GM12878 (cell line): ENCODE measurements at regions of chr13 and their contacts with region 1.

Region 1: DNA sequence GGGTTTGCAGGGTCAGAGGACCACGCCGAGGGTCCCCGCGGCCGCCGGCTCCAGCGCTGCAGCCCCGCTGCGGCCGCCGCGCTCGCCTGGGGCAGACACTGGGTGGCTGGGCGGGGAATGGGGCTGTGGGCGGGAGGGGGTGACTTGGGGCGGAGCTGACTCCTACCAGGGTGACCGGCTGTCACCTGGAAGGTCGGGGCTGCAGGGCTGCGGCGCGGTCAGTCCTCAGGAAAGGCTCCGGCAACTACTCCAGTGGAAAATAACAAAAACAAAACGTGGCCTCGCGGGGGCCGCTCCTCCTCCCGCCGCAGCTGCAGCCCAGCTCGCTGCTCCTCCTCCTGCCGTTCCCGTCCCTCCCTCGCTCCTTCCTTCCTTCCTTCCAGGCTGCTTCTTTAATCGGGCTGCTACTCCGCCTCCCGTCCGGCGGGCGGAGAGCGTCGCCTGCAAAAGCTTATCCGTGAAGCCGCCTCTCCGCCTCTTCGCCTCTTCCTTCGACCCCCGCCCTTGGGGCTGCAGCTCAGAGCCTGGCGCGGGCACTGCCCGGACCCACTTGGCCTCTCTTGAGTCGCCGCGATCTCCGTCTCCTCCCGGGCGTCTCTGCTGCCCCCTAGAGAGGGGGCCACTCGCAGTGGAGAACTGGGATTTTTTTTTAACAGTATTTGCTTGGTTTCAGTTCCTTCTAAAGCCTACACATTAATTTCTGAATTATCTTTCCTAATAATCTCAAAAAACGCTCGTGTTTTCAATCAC is at the start of gene TBC1D4:
- DNase-seq: peak; percentile 66
- ATAC-seq: peak; percentile 86
- H3K4me3 ChIP-seq: peak within 1 kb of the TSS; percentile 82
- H3K27ac ChIP-seq: peak within 1 kb of the TSS; percentile 55
- H3K4me1 ChIP-seq: peaks cover 8% of the 10 kb centered on the region
- H3K27me3 ChIP-seq: no peaks in the 10 kb centered on the region
- CTCF ChIP-seq: peak; percentile 81 to 88 (median 86)
- EP300 ChIP-seq: peak in 1 of 2 experiments; percentile 84; a peak in 2 of 4 replicates
- POLR2A ChIP-seq: peak; percentile 73
- RAD21 ChIP-seq: peak; percentile 82
- polyA plus RNA-seq, gene TBC1D4: 11.0 to 11.9 TPM

Region 2: GRCh38 chr13:75299913-75300862 is 182.1 kb before region 1 on chr13:
- CTCF ChIA-PET with region 1: no interaction called
- POLR2A ChIA-PET with region 1: no interaction called
- RAD21 ChIA-PET with region 1: interaction called, 4 read pairs
- SMC1A ChIA-PET with region 1: no interaction called
- in situ Hi-C with region 1: no loop called
- intact Hi-C with region 1: loop called (anchors 5 kb)
- DNase-seq: peak; percentile 67
- ATAC-seq: peak; percentile 80
- H3K4me3 ChIP-seq: no peak overlapping the region
- H3K27ac ChIP-seq: peak overlapping the region; percentile 78
- H3K4me1 ChIP-seq: peaks cover 12% of the 10 kb centered on the region
- H3K27me3 ChIP-seq: no peaks in the 10 kb centered on the region
- CTCF ChIP-seq: no peak
- EP300 ChIP-seq: peak; percentile 62 to 71; a peak in 3 of 4 replicates
- POLR2A ChIP-seq: no peak
- RAD21 ChIP-seq: no peak

Region 3: GRCh38 chr13:75357576-75358289 is 124.5 kb before region 1 on chr13:
- CTCF ChIA-PET with region 1: interaction called, 11 read pairs
- POLR2A ChIA-PET with region 1: no interaction called
- RAD21 ChIA-PET with region 1: interaction called, 6 read pairs
- SMC1A ChIA-PET with region 1: interaction called, 5 read pairs
- in situ Hi-C with region 1: no loop called
- intact Hi-C with region 1: no loop called
- DNase-seq: no peak
- ATAC-seq: peak; percentile 95
- H3K4me3 ChIP-seq: no peak overlapping the region
- H3K27ac ChIP-seq: no peak overlapping the region
- H3K4me1 ChIP-seq: no peaks in the 10 kb centered on the region
- H3K27me3 ChIP-seq: no peaks in the 10 kb centered on the region
- CTCF ChIP-seq: peak; percentile 64 to 83 (median 75)
- EP300 ChIP-seq: no peak
- POLR2A ChIP-seq: no peak
- RAD21 ChIP-seq: peak; percentile 66

Region 4: DNA sequence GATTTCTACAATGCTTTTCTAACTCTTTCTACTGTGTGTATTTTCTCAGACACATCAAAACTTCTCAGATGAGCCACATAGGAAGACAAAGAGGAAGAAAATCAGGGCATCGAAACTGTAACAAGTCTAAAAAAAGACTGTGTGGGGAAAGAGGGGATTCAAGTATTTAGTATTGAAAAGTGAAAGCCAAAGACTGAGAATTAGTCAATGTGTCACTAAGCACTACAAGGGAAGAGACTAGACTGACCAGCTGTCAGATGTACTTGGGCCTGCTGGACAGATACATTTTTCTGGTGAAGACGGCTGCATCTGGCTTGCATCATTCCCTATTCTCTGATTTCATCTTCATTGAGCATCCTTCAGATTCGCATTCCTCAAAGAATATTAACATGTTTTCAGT is 30.0 kb after region 1 on chr13:
- CTCF ChIA-PET with region 1: interaction called, 4 read pairs
- POLR2A ChIA-PET with region 1: no interaction called
- RAD21 ChIA-PET with region 1: interaction called, 7 read pairs
- SMC1A ChIA-PET with region 1: interaction called, 18 read pairs
- in situ Hi-C with region 1: no loop called
- intact Hi-C with region 1: no loop called
- DNase-seq: peak; percentile 80
- ATAC-seq: peak; percentile 93
- H3K4me3 ChIP-seq: no peak overlapping the region
- H3K27ac ChIP-seq: no peak overlapping the region
- H3K4me1 ChIP-seq: peaks cover 40% of the 10 kb centered on the region
- H3K27me3 ChIP-seq: no peaks in the 10 kb centered on the region
- CTCF ChIP-seq: no peak
- EP300 ChIP-seq: peak in 1 of 2 experiments; percentile 20; a peak in 1 of 4 replicates
- POLR2A ChIP-seq: no peak
- RAD21 ChIP-seq: no peak

Region 5: DNA sequence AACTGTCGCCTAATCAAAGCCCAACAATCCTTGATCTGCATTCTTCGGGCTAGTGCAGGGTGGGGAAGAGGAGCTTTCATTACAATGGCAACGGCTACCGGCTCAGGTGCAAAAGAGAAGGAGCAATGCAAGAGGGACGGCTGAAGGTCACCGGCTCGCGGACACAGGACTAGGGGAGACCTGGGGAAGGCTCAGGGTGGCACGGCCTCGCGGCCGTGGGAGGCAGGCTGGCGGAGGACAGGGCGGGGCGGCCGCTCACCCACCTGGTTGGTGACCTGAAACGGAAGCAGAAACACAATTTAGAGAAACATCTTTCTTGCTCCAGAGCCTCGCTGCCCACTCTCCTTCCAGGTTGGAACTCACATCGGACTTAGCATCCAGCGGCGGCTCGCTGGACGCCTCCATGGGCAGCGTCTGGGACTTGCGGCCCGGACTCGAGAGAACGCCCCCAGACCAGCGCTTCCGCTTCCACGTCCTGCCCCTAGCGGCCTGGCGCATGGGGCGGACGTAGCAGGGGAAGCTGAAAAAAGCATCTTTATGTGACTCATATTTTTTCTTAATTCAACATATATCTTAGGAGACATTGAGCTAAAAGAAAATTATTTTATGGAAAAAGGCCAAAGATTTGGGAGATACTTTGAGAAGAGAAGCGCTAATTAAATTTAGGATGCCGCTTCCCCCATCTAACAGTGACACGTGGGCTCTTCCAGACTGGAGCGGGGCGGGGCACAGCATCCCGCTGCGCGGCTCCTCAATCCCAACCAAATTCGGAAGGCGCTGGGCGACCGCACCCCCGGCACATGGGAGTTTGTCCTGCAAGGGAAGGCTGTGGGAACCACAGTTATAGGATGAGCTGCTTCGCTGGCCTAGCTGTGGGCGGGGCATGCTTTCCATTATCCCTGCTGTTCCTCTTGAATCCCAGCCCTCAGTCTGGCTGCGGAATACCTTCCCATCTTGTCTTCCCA is 55.4 kb after region 1 on chr13 and contains the start of gene COMMD6:
- CTCF ChIA-PET with region 1: interaction called, 5 read pairs
- POLR2A ChIA-PET with region 1: interaction called, 3 read pairs
- RAD21 ChIA-PET with region 1: interaction called, 5 read pairs
- SMC1A ChIA-PET with region 1: interaction called, 5 read pairs
- in situ Hi-C with region 1: no loop called
- intact Hi-C with region 1: loop called (anchors 2 kb)
- DNase-seq: peak; percentile 42
- ATAC-seq: peak; percentile 97
- H3K4me3 ChIP-seq: peak within 1 kb of the TSS; percentile 96
- H3K27ac ChIP-seq: peak within 1 kb of the TSS; percentile 28
- H3K4me1 ChIP-seq: peaks cover 5% of the 10 kb centered on the region; the same call in 1 of the 2 replicates
- H3K27me3 ChIP-seq: no peaks in the 10 kb centered on the region
- CTCF ChIP-seq: no peak
- EP300 ChIP-seq: no peak
- POLR2A ChIP-seq: peak; percentile 97
- RAD21 ChIP-seq: no peak
- polyA plus RNA-seq, gene COMMD6: 473 to 509 TPM

Region 6: DNA sequence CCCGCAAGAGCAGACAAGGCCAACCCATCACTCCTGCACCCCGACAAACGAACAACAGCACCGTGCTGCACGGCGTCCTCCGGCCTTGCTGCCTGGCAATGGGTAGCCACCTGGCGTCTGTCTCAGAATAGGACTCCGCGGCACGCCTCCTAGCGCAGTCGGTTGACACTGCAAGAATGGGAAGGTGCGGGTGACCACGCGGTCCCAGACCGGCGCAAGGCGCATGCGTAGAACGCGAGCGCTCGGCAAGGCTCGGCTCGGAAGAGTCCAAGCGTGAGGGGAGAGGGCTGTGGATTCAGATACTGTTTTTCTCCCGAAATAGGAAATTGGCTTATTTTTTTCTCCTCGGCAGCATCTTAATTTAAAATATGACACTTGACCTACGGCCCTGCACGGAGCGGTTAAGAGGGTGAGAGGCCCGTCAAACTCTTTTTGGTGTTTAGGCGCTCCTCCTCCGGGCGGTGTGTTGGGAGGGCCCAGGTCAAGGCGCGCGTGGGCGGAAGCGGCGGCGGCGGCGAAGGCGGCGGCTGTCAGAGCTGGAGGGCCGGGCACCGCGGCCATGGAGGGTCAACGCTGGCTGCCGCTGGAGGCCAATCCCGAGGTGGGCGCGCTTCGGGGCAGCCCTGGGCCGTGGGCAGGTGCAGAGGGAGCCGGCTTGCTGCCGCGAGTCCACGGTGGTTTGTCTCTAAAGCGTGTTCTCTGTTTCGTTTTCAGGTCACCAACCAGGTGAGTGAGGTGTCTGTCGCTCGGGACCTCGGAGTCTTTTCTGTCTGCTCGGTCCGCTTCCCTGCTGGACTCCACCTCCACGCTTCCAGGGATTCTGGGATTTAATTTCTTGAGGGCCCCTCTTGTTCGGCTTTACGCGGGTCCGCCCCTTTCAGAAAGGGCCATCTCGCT is 67.3 kb after region 1 on chr13 and contains the start of gene UCHL3:
- CTCF ChIA-PET with region 1: interaction called, 16 read pairs
- POLR2A ChIA-PET with region 1: no interaction called
- RAD21 ChIA-PET with region 1: interaction called, 17 read pairs
- SMC1A ChIA-PET with region 1: interaction called, 4 read pairs
- in situ Hi-C with region 1: no loop called
- intact Hi-C with region 1: loop called (anchors 1 kb)
- DNase-seq: peak; percentile 89
- ATAC-seq: peak; percentile 97
- H3K4me3 ChIP-seq: peak within 1 kb of the TSS; percentile 86
- H3K27ac ChIP-seq: peak within 1 kb of the TSS; percentile 82
- H3K4me1 ChIP-seq: peaks cover 9% of the 10 kb centered on the region
- H3K27me3 ChIP-seq: no peaks in the 10 kb centered on the region
- CTCF ChIP-seq: peak; percentile 95 to 99 (median 96); a peak in 5 of 6 replicates
- EP300 ChIP-seq: 0 out of 4 replicates have a peak, but pooled peaks of 1 of the 2 experiments have one; percentile 35
- POLR2A ChIP-seq: peak; percentile 97
- RAD21 ChIP-seq: peak; percentile 88
- polyA plus RNA-seq, gene UCHL3: 163 to 166 TPM

Region 7: GRCh38 chr13:75596657-75597182 is 114.5 kb after region 1 on chr13:
- CTCF ChIA-PET with region 1: no interaction called
- POLR2A ChIA-PET with region 1: no interaction called
- RAD21 ChIA-PET with region 1: no interaction called
- SMC1A ChIA-PET with region 1: no interaction called
- in situ Hi-C with region 1: no loop called
- intact Hi-C with region 1: no loop called
- DNase-seq: no peak
- ATAC-seq: no peak
- H3K4me3 ChIP-seq: no peak overlapping the region
- H3K27ac ChIP-seq: no peak overlapping the region
- H3K4me1 ChIP-seq: no peaks in the 10 kb centered on the region
- H3K27me3 ChIP-seq: no peaks in the 10 kb centered on the region
- CTCF ChIP-seq: no peak
- EP300 ChIP-seq: no peak
- POLR2A ChIP-seq: no peak
- RAD21 ChIP-seq: no peak

Region 8: GRCh38 chr13:75715601-75716523 is 233.6 kb after region 1 on chr13:
- CTCF ChIA-PET with region 1: no interaction called
- POLR2A ChIA-PET with region 1: no interaction called
- RAD21 ChIA-PET with region 1: no interaction called
- SMC1A ChIA-PET with region 1: no interaction called
- in situ Hi-C with region 1: no loop called
- intact Hi-C with region 1: no loop called
- DNase-seq: peak; percentile 41
- ATAC-seq: peak; percentile 96
- H3K4me3 ChIP-seq: no peak overlapping the region
- H3K27ac ChIP-seq: peak overlapping the region; percentile 35; the same call in 1 of the 2 replicates
- H3K4me1 ChIP-seq: no peaks in the 10 kb centered on the region
- H3K27me3 ChIP-seq: no peaks in the 10 kb centered on the region
- CTCF ChIP-seq: no peak
- EP300 ChIP-seq: no peak
- POLR2A ChIP-seq: no peak
- RAD21 ChIP-seq: no peak

Region 9: GRCh38 chr13:76116751-76117360 is 634.6 kb after region 1 on chr13:
- CTCF ChIA-PET with region 1: no interaction called
- POLR2A ChIA-PET with region 1: no interaction called
- RAD21 ChIA-PET with region 1: no interaction called
- SMC1A ChIA-PET with region 1: no interaction called
- in situ Hi-C with region 1: no loop called
- intact Hi-C with region 1: no loop called
- DNase-seq: no peak
- ATAC-seq: no peak
- H3K4me3 ChIP-seq: no peak overlapping the region
- H3K27ac ChIP-seq: no peak overlapping the region
- H3K4me1 ChIP-seq: no peaks in the 10 kb centered on the region
- H3K27me3 ChIP-seq: no peaks in the 10 kb centered on the region
- CTCF ChIP-seq: no peak
- EP300 ChIP-seq: no peak
- POLR2A ChIP-seq: no peak
- RAD21 ChIP-seq: no peak